K562 (cell line): ENCODE measurements at regions of chr6 and their contacts with region 1.

Region 1: GRCh38 chr6:53359072-53359842 is 10.5 kb upstream of the ELOVL5 start:
- DNase-seq: peak; percentile 98 to 99 (median 98)
- ATAC-seq: peak; percentile 96
- H3K4me3 ChIP-seq: peak overlapping the region; percentile 46
- H3K27ac ChIP-seq: peak overlapping the region; percentile 99
- H3K4me1 ChIP-seq: peaks cover 20 to 32% of the 10 kb centered on the region in 2 experiments
- H3K27me3 ChIP-seq: no peaks in the 10 kb centered on the region
- CTCF ChIP-seq: no peak
- EP300 ChIP-seq: peak; percentile 33; the same call in 1 of the 2 replicates
- POLR2A ChIP-seq: peak; percentile 82
- RAD21 ChIP-seq: peak in 1 of 2 experiments; percentile 15; a peak in 2 of 4 replicates

Region 2: GRCh38 chr6:53309059-53309900 is 50.0 kb before region 1 on chr6:
- CTCF ChIA-PET with region 1: no interaction called
- POLR2A ChIA-PET with region 1: interaction called, 6 read pairs
- in situ Hi-C with region 1: no loop called
- intact Hi-C with region 1: loop called (anchors 2 kb)
- DNase-seq: peak; percentile 37 to 69 (median 46)
- ATAC-seq: peak; percentile 38
- H3K4me3 ChIP-seq: no peak overlapping the region
- H3K27ac ChIP-seq: peak overlapping the region; percentile 86
- H3K4me1 ChIP-seq: peaks cover 17 to 68% of the 10 kb centered on the region in 2 experiments
- H3K27me3 ChIP-seq: no peaks in the 10 kb centered on the region
- CTCF ChIP-seq: no peak
- EP300 ChIP-seq: no peak
- POLR2A ChIP-seq: no peak
- RAD21 ChIP-seq: no peak

Region 3: DNA sequence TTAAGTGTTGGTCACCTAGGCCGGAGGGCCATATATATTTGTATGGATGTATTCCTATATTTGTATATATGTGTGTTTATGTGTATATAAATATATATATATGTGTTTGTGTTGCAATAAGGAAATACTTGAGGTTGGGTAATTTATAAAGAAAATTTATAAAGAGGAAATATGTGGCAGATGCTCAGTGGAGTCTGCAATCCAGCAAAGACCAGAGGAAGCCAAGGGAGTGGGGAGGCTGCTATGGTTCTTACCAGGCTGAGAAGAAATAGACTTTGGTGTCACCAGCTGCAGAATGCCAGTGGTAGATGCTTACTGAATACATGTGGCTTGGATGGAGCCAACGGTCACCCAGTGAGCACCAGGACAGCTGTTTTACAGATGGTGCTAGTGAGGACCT is 86.9 kb after region 1 on chr6:
- CTCF ChIA-PET with region 1: no interaction called
- POLR2A ChIA-PET with region 1: no interaction called
- in situ Hi-C with region 1: no loop called
- intact Hi-C with region 1: no loop called
- DNase-seq: no peak
- ATAC-seq: no peak
- H3K4me3 ChIP-seq: no peak overlapping the region
- H3K27ac ChIP-seq: no peak overlapping the region
- H3K4me1 ChIP-seq: no peaks in the 10 kb centered on the region
- H3K27me3 ChIP-seq: peaks cover 10 to 29% of the 10 kb centered on the region in 2 experiments; a peak in 4 of 5 replicates
- CTCF ChIP-seq: no peak
- EP300 ChIP-seq: no peak
- POLR2A ChIP-seq: no peak
- RAD21 ChIP-seq: no peak

Region 4: GRCh38 chr6:53544470-53545308 is 185.4 kb after region 1 on chr6 and contains the start of gene GCLC:
- CTCF ChIA-PET with region 1: no interaction called
- POLR2A ChIA-PET with region 1: no interaction called
- in situ Hi-C with region 1: no loop called
- intact Hi-C with region 1: loop called (anchors 10 kb)
- DNase-seq: peak; percentile 87 to 97 (median 91)
- ATAC-seq: peak; percentile 83
- H3K4me3 ChIP-seq: peak within 1 kb of the TSS; percentile 77
- H3K27ac ChIP-seq: peak within 1 kb of the TSS; percentile 88
- H3K4me1 ChIP-seq: peaks cover 23 to 40% of the 10 kb centered on the region in 2 experiments
- H3K27me3 ChIP-seq: no peaks in the 10 kb centered on the region
- CTCF ChIP-seq: peak; percentile 63 to 88 (median 75)
- EP300 ChIP-seq: 0 out of 2 replicates have a peak, but pooled peaks have one; percentile 22
- POLR2A ChIP-seq: peak; percentile 79
- RAD21 ChIP-seq: peak; percentile 87 to 89
- polyA plus RNA-seq, gene GCLC: 3.9 to 5.1 TPM